ENCODE measurements at regions of chr6 and their contacts with region 1.

Region 1: DNA sequence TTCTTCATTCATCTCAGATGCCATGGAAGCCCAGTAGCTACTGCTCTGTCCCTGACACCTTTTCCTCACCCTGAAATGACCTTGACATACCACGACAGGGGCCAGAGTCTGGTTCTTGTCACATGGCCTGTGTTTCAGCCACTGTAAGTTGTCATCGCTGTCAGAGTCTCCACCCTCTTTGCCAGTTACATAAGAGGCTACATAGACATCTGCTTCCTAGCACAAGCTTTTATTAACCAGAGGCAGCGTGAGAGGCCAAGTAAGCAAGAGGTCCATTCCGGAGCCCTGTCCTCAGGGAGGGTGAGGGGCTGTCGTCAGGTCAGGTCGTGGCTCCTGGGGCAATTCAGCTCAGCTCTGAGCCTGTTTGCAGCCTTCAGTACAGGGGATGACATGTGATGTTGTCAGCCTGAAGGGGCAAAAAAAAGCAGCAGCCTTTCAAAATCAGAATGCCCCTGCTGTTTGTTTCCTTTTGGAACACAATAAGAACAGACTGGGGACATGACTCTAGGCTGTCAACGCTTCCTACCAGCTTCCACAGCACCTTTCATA is 146.3 kb downstream of the MTFR2 start:
- DNase-seq: peak; percentile 46
- ATAC-seq: peak; percentile 96 to 97

Region 2: GRCh38 chr6:135994857-135995544 is 108.8 kb before region 1 on chr6:
- intact Hi-C with region 1: no loop called
- DNase-seq: no peak
- ATAC-seq: peak in 1 of 2 donors; percentile 90

Region 3: DNA sequence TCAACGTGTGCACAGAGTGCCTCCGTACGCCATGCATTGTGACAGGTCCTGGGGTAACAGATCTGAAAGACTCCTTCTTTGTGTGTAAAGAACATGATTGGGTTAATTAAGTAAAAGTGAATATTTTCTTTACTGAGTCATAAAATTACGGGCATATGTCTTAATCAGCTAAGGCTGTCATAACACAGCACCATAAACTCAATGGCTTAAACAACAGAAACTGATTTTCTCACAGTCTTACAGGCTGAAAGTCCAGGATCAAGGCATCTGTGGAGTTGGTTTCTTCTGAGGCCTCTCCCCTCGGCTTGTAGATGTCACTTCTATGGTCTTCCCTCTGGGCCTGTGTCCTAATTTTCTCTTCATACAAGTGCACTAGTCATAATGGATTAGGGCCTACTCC is 30.6 kb before region 1 on chr6:
- intact Hi-C with region 1: loop called in 1 of 2 experiments (anchors 2 kb)
- DNase-seq: no peak
- ATAC-seq: peak in 1 of 2 donors; percentile 31

Measured in left cardiac atrium (tissue), 4 donors.